Activated CD4-positive, alpha-beta T cell treated with anti-CD3 and anti-CD28 coated beads for 36 hours (primary cell): ENCODE measurements at regions of chr14 and their contacts with region 1.

Region 1: GRCh38 chr14:103528587-103529382 is at the start of gene TRMT61A:
- DNase-seq: peak; percentile 87
- ATAC-seq: peak; percentile 77
- H3K4me3 Mint-ChIP-seq: peak within 1 kb of the TSS; percentile 96
- H3K27ac Mint-ChIP-seq: peak within 1 kb of the TSS; percentile 94
- H3K4me1 Mint-ChIP-seq: peaks cover 33% of the 10 kb centered on the region
- H3K27me3 Mint-ChIP-seq: peaks cover 2% of the 10 kb centered on the region
- total RNA-seq, gene TRMT61A: 8.8 to 9.0 TPM

Region 2: DNA sequence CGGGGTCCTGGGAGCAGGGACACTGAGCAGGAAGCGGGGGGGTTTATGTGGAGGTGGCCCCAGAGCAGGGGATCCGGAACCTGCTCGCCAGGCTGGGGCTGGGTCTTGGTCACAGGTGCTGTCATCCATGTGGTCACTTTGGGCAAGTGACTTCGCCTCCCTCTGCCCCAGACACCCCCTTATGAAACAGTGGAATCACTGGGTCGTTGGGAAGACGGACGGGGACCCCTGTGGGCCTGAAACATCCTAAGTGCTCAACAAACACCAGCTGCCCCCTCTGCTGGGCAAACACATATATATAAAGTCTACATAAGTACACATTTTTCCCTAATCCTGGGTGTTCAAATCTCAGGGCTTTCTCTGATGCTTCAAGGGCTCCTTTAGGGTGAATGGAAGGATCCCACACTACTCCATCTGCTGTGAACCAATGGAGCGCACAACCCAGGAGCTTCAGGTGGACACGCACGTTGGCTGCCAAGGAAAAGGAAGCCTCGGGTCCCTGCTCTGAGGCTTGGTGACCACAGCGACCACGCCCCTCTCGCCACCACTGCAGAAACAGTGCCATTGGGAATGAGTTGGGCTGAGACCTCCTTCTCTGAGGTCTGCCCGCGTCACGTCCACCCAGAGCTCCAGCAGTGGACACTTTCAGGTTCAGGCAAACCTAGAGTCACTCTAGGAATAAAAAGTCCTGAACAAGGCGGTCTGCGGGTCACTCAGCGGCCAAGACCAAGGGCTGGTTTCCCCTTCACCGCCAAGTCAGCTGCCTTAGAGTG is 526.0 kb before region 1 on chr14:
- CTCF ChIA-PET with region 1: no interaction called
- POLR2A ChIA-PET with region 1: no interaction called
- intact Hi-C with region 1: no loop called
- DNase-seq: no peak
- ATAC-seq: no peak
- H3K4me3 Mint-ChIP-seq: no peak overlapping the region
- H3K27ac Mint-ChIP-seq: no peak overlapping the region
- H3K4me1 Mint-ChIP-seq: no peaks in the 10 kb centered on the region
- H3K27me3 Mint-ChIP-seq: no peaks in the 10 kb centered on the region

Region 3: GRCh38 chr14:103628684-103629502 is 100.1 kb after region 1 on chr14 and contains the start of gene KLC1:
- CTCF ChIA-PET with region 1: no interaction called
- POLR2A ChIA-PET with region 1: no interaction called
- intact Hi-C with region 1: loop called in 1 of 2 experiments (anchors 1 kb)
- DNase-seq: peak; percentile 92
- ATAC-seq: peak; percentile 77
- H3K4me3 Mint-ChIP-seq: peak within 1 kb of the TSS; percentile 87
- H3K27ac Mint-ChIP-seq: peak within 1 kb of the TSS; percentile 81
- H3K4me1 Mint-ChIP-seq: peaks cover 35% of the 10 kb centered on the region
- H3K27me3 Mint-ChIP-seq: no peaks in the 10 kb centered on the region
- total RNA-seq, gene KLC1: 97.4 to 113 TPM

Region 4: DNA sequence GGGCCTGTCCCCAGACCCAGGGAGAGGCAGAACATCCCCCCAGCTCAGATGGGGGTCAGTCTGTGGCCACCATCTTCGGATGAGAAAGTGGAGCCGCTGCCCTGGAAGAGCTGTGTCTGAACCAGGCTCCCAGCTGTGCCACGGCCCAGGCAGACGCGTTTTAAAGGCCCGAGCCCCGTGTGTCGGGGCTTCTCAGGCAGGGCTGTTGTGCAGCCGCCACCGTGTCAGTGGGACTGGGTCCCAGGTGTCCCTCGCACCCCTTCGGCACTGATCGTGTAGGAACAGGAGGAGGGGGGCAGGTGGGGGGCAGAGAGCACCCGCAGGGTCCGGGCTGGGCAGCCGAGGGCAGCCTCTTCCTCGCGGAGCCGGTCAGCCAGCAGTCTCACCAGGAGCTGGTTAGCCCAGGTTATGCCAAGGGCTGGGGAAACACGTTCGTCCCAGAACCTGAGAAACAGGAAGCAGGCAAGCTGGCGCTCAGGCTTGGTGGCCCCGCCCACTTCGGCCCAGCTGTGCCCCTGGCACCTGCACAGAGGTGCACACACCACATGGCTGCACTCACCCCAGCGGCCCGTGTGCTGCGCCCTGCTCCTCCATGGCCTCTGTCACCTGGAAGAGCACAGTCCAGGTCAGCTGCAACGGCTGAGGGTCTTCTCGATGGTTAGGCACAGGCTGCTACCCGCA is 169.9 kb after region 1 on chr14:
- CTCF ChIA-PET with region 1: no interaction called
- POLR2A ChIA-PET with region 1: no interaction called
- intact Hi-C with region 1: no loop called
- DNase-seq: no peak
- ATAC-seq: no peak
- H3K4me3 Mint-ChIP-seq: no peak overlapping the region
- H3K27ac Mint-ChIP-seq: no peak overlapping the region
- H3K4me1 Mint-ChIP-seq: no peaks in the 10 kb centered on the region
- H3K27me3 Mint-ChIP-seq: no peaks in the 10 kb centered on the region